Cardiac septum (tissue), 1 donor: ENCODE measurements at regions of chr4 and their contacts with region 1.

Region 1: DNA sequence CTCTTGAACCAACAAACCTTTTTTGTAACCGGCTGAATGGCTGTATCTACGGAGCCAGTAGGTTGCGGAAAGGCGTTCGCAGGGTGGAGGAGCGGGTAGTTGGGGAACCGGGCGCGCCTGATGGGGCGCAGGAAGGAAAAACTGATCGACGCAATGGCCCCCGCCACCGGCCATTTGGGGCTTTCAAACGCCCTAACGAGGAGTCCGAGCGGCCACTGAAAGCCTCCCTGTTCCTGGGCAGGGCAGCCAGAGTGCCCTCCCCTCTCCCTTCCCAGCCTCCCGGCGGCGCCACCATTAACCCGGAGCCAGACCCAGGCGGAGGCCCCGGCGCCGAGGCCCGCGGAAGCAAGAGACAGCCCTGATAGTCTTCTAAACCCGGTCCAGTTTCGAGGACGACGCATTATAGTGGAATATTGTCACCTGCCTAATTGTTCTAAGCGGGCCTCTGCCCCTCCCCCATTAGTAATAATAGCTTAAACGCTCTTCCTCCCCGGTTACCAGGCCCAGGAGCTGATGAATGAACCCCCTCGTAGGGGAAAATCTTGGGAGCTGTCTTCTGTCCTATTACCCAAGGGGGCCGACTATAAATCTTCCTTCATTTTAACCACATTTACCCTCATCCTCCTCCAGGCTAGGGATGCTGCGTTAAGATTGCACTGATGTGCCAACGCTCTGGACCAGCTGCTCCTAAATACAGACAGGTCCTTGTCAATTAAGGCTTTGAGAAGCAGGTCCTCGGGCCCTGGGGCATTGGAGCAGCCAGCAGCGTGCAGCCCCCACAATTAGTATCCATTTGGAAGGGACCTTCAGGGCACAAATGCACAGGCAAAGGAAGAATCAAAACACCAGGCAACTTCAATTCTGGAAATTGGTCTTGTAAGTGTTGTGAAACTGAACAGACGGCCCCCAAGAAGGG is 61.6 kb upstream of the TMEM33 start:
- DNase-seq: no peak

Region 2: GRCh38 chr4:41747230-41748055 is 126.2 kb before region 1 on chr4:
- intact Hi-C with region 1: loop called (anchors 5 kb)
- DNase-seq: no peak

Region 3: GRCh38 chr4:41796545-41797210 is 77.0 kb before region 1 on chr4:
- intact Hi-C with region 1: no loop called
- DNase-seq: no peak